Transverse colon (tissue), 4 donors: ENCODE measurements at regions of chr13 and their contacts with region 1.

Region 1: GRCh38 chr13:93715866-93716265 is 489.3 kb downstream of the GPC6 start:
- DNase-seq: no peak
- H3K4me3 ChIP-seq: no peak overlapping the region
- H3K27ac ChIP-seq: no peak overlapping the region
- H3K4me1 ChIP-seq: no peaks in the 10 kb centered on the region
- H3K27me3 ChIP-seq: no peaks in the 10 kb centered on the region
- CTCF ChIP-seq: no peak
- EP300 ChIP-seq: no peak
- POLR2A ChIP-seq: no peak

Region 2: DNA sequence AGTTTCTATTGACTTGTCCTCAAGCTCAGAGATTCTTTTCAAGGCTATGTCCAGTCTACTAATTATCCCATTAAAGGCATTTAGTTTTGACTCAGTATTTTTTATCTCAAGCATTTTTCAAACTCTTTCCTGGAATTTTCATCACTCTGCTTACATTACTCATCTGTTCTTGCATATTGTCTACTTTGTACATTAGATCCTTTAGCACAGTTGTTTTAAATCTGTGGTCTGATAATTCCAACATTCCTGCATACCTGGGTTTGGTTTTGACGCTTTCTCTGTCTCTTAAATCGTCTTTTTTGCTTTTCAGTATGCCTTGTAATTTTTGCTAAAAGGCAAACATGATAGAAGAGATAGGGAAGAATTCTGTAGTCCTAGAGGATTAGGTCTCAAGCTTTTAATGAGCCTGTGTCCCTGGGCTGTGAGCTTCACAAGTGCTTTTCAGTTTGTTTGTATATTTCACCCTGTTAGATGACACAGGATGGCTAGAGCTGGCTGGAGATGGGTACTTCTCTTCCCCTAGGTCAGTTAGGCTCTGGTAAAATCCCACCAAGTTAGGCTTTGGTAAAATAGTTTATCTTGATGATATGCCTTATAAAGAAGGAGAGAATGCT is 535.4 kb before region 1 on chr13:
- in situ Hi-C with region 1: no loop called
- intact Hi-C with region 1: no loop called
- DNase-seq: no peak
- H3K4me3 ChIP-seq: no peak overlapping the region
- H3K27ac ChIP-seq: no peak overlapping the region
- H3K4me1 ChIP-seq: no peaks in the 10 kb centered on the region
- H3K27me3 ChIP-seq: no peaks in the 10 kb centered on the region
- CTCF ChIP-seq: no peak
- EP300 ChIP-seq: no peak
- POLR2A ChIP-seq: no peak

Region 3: DNA sequence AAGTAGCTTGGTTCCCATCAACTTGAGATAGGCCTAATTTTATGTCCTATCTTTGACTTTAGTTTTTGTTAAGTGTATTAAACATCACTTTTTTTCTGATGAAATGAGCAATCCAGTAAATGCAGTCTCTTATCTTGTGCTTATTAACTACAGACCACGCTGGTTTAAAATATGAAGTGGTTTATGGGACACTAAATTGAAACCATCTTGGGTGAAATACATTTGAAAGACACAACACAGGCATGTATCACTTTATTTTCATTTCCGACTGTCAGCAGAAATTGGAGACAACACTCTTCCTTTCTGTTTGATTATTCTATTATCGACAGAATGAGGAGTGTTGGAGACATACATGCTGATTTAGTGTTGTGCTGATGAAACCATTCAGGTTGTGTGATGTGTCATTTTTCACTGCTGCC is 41.5 kb before region 1 on chr13:
- in situ Hi-C with region 1: no loop called
- intact Hi-C with region 1: loop called (anchors 2 kb)
- DNase-seq: no peak
- H3K4me3 ChIP-seq: no peak overlapping the region
- H3K27ac ChIP-seq: no peak overlapping the region
- H3K4me1 ChIP-seq: no peaks in the 10 kb centered on the region
- H3K27me3 ChIP-seq: no peaks in the 10 kb centered on the region
- CTCF ChIP-seq: no peak
- EP300 ChIP-seq: no peak
- POLR2A ChIP-seq: no peak

Region 4: DNA sequence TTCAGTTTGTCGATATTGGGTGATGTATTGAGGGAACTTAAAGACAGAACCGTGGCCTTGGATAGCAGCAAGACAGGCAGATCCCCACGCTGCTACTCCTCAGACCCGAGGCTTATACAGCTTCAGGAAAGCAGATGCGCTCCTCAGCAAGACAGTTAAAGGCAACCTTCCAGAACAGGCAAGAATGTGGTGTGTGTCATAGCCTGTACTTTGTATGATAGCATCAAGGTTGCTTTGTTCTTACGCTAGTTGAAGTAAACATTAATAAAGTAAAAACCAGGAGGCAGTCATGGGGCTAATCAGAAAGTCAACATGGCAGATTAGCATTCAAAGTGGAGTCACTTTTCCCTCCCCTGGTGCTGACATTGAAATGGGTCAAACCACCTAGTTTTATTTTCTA is 290.4 kb after region 1 on chr13:
- in situ Hi-C with region 1: no loop called
- intact Hi-C with region 1: no loop called
- DNase-seq: no peak
- H3K4me3 ChIP-seq: no peak overlapping the region
- H3K27ac ChIP-seq: no peak overlapping the region
- H3K4me1 ChIP-seq: no peaks in the 10 kb centered on the region
- H3K27me3 ChIP-seq: no peaks in the 10 kb centered on the region
- CTCF ChIP-seq: no peak
- EP300 ChIP-seq: no peak
- POLR2A ChIP-seq: no peak